Heart right ventricle (tissue), 16 donors: ENCODE measurements at regions of chr15 and their contacts with region 1.

Region 1: DNA sequence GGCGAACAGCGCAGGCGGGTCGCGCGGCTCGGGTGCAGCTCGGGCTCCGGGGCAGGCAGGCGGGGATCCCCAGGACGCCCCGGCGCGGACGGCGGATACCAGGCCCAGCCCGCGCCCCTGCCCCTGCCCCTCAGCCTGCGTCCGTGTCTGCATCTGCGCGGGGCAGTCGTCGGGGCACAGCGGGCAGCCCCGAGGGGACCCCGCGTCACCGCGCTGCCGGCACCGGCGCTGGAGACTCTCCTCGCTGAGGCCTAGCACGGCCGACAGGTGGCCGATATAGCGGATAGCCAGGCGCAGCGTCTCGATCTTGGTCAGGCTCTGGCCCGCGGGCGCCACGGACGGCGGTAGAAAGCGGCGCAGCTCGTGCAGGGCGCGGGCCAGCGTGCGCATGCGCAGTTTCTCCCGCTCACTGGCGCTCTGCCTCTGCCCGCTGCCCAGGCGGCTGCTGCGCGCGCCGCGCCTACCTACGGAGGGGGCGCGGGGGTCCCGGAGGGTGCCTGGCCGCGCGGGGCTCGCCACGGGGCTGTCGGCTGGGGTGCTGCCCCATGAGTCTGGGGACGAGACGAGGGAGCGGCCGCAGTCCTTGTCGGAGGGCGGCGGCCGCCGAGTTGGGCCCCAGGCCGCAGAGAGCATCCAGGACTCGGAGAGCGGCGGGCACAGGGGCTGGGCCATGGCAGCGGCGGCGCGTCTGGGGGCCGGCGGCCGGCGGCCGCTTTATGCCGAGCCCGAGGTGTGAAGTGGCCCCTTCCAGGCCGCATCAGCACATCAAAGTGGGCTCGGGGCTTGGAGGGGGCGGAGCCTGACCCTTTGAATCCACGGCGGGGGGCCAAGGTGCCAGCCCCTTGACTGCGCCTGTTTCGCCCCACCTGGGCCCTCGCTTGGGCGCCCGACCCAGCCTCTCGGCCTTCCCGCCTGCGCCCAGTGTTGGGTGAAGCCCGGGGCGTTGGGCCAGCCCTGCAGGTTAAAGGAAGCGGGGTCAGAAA is at the start of gene MESP1:
- DNase-seq: peak; percentile 87 to 92
- ATAC-seq: peak; percentile 95 to 97 (median 96)
- H3K4me3 ChIP-seq: peak within 1 kb of the TSS; percentile 48 to 80 (median 67)
- H3K27ac ChIP-seq: peak within 1 kb of the TSS in 6 of 10 donors; percentile 1 to 70 (median 48)
- H3K4me1 ChIP-seq: peaks cover 0 to 17% (median 14%) of the 10 kb centered on the region in 9 donors
- H3K27me3 ChIP-seq: peaks cover 0 to 34% (median 20%) of the 10 kb centered on the region in 7 donors
- CTCF ChIP-seq: peak; percentile 43 to 87 (median 74)
- total RNA-seq, gene MESP1: 1.3 to 7.6 (median 5.6) TPM

Region 2: DNA sequence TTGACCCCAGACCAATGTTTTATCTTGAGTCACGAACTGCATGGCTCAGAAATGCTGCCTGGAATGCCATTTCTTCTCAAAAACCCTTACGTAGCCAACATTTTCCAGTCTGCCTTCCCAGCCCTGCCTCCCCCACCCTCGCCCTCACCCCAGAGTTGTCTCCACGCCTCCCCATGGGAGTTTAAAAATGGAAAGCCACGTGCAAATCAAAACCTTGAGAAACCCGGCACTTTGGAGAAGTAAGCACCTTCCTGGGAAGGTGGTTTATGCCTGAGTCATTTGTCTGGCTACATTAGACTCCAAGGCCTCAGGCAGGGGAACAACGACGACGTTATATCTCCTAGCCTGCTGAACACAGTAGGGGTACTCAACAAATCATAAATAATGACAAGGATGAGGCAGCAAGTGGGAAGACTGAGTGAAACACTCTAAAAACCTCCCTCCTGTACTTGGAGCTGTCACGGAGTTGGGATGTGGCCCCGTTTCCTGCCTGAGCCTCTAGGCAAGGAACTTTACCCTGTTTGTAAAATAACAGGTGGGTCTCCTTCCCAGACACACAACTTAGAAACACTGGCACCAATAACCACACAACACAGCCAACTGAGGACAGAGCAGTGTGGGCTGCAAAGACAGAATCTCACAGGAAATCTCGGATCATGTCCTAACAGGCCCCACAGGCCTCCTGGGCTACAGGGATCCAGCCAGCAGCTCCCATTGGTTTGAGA is 1673.4 kb before region 1 on chr15:
- intact Hi-C with region 1: no loop called
- DNase-seq: no peak
- ATAC-seq: no peak
- H3K4me3 ChIP-seq: no peak overlapping the region
- H3K27ac ChIP-seq: no peak overlapping the region
- H3K4me1 ChIP-seq: no peaks in the 10 kb centered on the region
- H3K27me3 ChIP-seq: peaks cover 0 to 6% (median 0%) of the 10 kb centered on the region in 7 donors
- CTCF ChIP-seq: no peak

Region 3: DNA sequence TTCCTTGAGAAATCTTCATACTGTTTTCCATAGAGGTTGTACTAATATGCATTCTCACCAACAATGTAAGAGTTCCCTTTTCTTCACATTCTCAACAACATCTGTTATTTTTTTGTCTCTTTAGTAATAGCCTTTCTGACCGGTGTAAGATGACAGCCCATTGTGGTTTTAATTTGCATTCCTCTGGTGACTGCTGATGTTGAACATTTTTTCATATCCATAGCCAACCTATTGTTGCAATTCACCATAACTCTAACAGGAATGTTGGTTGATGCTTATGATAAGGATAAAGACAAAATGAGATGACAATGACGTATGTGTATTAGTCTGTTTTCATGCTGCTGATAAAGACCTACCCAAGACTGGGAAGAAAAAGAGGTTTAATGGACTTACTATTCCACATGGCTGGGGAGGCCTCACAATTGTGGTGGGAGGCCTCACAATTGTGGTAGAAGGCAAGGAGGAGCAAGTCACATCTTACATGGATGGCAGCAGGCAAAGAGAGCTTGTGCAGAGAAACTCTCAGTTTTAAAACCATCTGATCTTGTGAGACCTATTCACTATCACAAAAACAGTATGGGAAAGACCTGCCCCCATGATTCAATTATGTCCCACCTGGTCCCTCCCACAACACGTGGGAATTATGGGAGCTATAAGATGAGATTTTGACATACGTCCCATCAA is 216.8 kb before region 1 on chr15:
- intact Hi-C with region 1: no loop called
- DNase-seq: no peak
- ATAC-seq: no peak
- H3K4me3 ChIP-seq: no peak overlapping the region
- H3K27ac ChIP-seq: no peak overlapping the region
- H3K4me1 ChIP-seq: no peaks in the 10 kb centered on the region
- H3K27me3 ChIP-seq: no peaks in the 10 kb centered on the region
- CTCF ChIP-seq: no peak

Region 4: DNA sequence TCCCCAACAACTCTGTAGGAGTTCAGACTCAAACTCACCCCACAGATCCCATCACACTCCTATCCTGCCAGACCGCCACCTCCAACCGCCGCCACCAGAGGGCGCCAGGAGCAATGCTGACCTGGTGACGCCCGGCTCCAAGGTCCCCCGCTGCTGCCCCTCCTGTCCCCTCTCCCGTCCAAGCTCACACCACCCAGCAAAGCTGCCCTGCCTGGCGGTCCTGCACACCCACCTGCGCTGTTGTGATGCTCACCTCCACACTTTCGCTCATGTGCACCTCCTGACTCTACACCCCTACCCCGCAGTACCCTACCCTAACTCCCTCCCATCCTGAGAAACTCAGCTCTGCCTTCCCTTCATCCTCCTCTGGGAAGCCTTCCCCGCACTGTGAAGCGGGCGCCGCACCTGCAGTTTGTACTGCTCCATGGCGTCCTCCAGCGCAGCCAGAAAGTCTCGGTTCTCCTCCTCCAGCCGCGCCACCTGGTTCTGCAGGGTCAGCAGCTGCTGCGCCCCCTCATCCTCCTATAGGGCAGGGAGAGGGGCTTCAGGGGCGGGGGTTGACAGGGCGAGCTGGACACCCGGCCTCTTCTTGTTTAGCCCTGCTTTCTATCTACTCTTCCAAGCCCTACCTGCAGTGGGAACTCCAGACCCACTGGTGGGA is 103.5 kb before region 1 on chr15:
- intact Hi-C with region 1: loop called in 1 of 10 experiments (anchors 2 kb)
- DNase-seq: peak; percentile 70 to 83
- ATAC-seq: peak; percentile 65 to 83 (median 70)
- H3K4me3 ChIP-seq: no peak overlapping the region
- H3K27ac ChIP-seq: no peak overlapping the region
- H3K4me1 ChIP-seq: peaks cover 0 to 12% (median 0%) of the 10 kb centered on the region in 9 donors
- H3K27me3 ChIP-seq: peaks cover 0 to 5% (median 0%) of the 10 kb centered on the region in 7 donors
- CTCF ChIP-seq: peak; percentile 60 to 87 (median 84)

Region 5: GRCh38 chr15:89714775-89715174 is 36.1 kb before region 1 on chr15:
- intact Hi-C with region 1: no loop called
- DNase-seq: no peak
- ATAC-seq: no peak
- H3K4me3 ChIP-seq: no peak overlapping the region
- H3K27ac ChIP-seq: no peak overlapping the region
- H3K4me1 ChIP-seq: no peaks in the 10 kb centered on the region
- H3K27me3 ChIP-seq: no peaks in the 10 kb centered on the region
- CTCF ChIP-seq: no peak

Region 6: GRCh38 chr15:89772932-89773583 is 22.2 kb after region 1 on chr15:
- intact Hi-C with region 1: no loop called
- DNase-seq: no peak
- ATAC-seq: no peak
- H3K4me3 ChIP-seq: no peak overlapping the region
- H3K27ac ChIP-seq: no peak overlapping the region
- H3K4me1 ChIP-seq: peaks cover 7 to 20% (median 15%) of the 10 kb centered on the region in 9 donors
- H3K27me3 ChIP-seq: peaks cover 0 to 14% (median 0%) of the 10 kb centered on the region in 7 donors
- CTCF ChIP-seq: peak in 2 of 9 donors; percentile 7 to 17

Region 7: GRCh38 chr15:89874926-89875564 is 124.2 kb after region 1 on chr15:
- intact Hi-C with region 1: loop called in 1 of 10 experiments (anchors 5 kb)
- DNase-seq: peak; percentile 75 to 84
- ATAC-seq: peak; percentile 82 to 94 (median 92)
- H3K4me3 ChIP-seq: no peak overlapping the region
- H3K27ac ChIP-seq: peak overlapping the region in 1 of 10 donors; percentile 72
- H3K4me1 ChIP-seq: peaks cover 0 to 34% (median 5%) of the 10 kb centered on the region in 9 donors
- H3K27me3 ChIP-seq: no peaks in the 10 kb centered on the region
- CTCF ChIP-seq: peak; percentile 82 to 98 (median 94)

Region 8: GRCh38 chr15:90071208-90071807 is 320.5 kb after region 1 on chr15:
- intact Hi-C with region 1: loop called in 1 of 10 experiments (anchors 10 kb)
- DNase-seq: peak; percentile 75 to 90
- ATAC-seq: peak in 7 of 8 donors; percentile 59 to 86 (median 83)
- H3K4me3 ChIP-seq: no peak overlapping the region
- H3K27ac ChIP-seq: peak overlapping the region in 3 of 10 donors; percentile 30 to 62 (median 32)
- H3K4me1 ChIP-seq: peaks cover 0 to 29% (median 8%) of the 10 kb centered on the region in 9 donors
- H3K27me3 ChIP-seq: no peaks in the 10 kb centered on the region
- CTCF ChIP-seq: peak; percentile 74 to 93 (median 85)

Region 9: GRCh38 chr15:90086868-90087268 is 336.0 kb after region 1 on chr15:
- intact Hi-C with region 1: loop called in 3 of 10 experiments (anchors 10 kb)
- DNase-seq: no peak
- ATAC-seq: peak in 1 of 8 donors; percentile 14
- H3K4me3 ChIP-seq: no peak overlapping the region
- H3K27ac ChIP-seq: no peak overlapping the region
- H3K4me1 ChIP-seq: peaks cover 0 to 19% (median 0%) of the 10 kb centered on the region in 9 donors
- H3K27me3 ChIP-seq: no peaks in the 10 kb centered on the region
- CTCF ChIP-seq: peak in 8 of 9 donors; percentile 29 to 76 (median 60)